Activated CD4-positive, alpha-beta memory T cell treated with anti-CD3 and anti-CD28 coated beads for 36 hours (primary cell): ENCODE measurements at regions of chr15 and their contacts with region 1.

Region 1: GRCh38 chr15:40108855-40109735 is at the start of gene BMF:
- DNase-seq: peak; percentile 98
- H3K4me3 Mint-ChIP-seq: peak within 1 kb of the TSS; percentile 84
- H3K27ac Mint-ChIP-seq: peak within 1 kb of the TSS; percentile 50
- H3K4me1 Mint-ChIP-seq: peaks cover 45% of the 10 kb centered on the region
- H3K27me3 Mint-ChIP-seq: peaks cover 6% of the 10 kb centered on the region
- total RNA-seq, gene BMF: 6.9 to 7.3 TPM

Region 2: DNA sequence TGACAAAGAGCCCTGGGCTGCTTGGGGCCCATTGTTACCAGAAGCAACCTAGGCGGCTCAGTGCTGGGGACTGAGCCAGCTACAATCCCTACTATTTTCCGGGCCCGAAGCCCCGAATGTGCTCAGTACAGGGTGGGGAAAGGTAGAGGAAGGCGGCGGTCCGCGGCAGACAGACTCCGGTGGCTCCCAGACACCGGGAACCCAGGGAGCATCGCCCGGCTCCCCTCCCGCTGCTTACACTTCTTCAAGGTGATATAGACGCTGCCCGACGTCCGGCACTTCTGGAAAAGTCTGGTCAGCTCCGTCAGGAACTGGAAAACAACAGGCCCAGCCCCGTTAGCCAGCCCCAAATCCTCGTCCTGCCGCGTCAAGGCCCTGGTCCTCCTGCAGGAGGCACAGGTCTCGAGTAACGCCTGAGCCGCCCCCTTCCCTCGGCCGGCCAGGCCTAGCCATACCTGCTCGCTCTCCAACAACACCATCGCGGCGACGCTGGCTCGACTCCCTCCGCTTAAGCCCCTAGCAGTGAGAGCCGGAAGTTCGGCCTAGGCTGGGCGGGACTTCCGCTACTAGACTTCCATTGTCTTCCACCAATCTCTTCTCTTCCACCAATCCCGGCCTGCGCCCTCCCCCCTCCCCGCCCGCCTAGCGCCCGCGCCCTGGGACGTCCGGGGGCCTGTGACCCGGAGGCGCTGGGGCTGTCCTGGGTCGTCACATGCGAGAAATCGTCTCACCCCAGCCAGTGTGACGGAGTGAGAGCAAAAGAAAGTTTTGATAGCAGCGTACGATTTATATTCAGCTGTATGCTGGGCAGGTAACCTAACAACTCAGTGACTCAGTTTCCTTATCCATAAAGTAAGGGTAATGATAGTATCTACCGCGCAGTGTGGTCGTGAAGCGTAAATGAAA is 70.2 kb before region 1 on chr15 and contains the start of gene SRP14:
- CTCF ChIA-PET with region 1: interaction called, 49 read pairs
- POLR2A ChIA-PET with region 1: interaction called, 12 read pairs
- intact Hi-C with region 1: no loop called
- DNase-seq: peak; percentile 97
- H3K4me3 Mint-ChIP-seq: peak within 1 kb of the TSS; percentile 98
- H3K27ac Mint-ChIP-seq: peak within 1 kb of the TSS; percentile 91
- H3K4me1 Mint-ChIP-seq: peaks cover 27% of the 10 kb centered on the region
- H3K27me3 Mint-ChIP-seq: no peaks in the 10 kb centered on the region
- total RNA-seq, gene SRP14: 168 to 170 TPM

Region 3: DNA sequence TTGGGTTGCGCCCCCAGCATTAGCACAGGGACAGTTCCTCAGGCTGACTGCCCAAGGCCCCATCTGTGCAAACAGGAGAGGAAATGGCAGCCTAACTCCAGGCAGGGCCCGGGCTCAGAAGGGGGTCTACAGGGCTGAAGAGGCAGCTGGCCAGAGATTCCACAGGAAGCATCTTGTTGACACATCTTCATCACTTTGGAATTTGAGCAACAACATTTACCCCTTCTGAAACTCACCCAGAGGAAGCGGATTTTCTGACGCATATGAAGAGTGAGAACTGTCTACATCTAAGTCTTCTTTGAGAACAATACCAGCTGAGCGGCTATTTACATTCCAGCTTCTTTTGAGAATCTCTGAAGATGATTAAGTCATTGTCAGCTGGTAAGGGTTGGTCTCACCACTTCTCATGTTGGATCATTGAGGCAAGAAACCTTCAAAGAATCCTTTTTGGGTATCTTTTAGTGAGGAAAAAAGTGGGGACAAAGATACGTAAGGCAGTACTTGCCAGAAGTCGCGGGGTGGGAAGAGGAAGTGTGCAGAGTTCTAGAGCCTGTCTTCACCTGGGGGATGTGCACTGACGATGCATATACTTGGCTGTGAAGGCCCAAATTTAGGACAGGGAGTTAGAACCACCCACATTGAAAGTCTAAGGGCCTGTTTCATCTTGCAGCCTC is 44.7 kb before region 1 on chr15:
- CTCF ChIA-PET with region 1: interaction called, 12 read pairs
- POLR2A ChIA-PET with region 1: interaction called, 3 read pairs
- intact Hi-C with region 1: no loop called
- DNase-seq: no peak
- H3K4me3 Mint-ChIP-seq: no peak overlapping the region
- H3K27ac Mint-ChIP-seq: peak overlapping the region; percentile 19
- H3K4me1 Mint-ChIP-seq: peaks cover 17% of the 10 kb centered on the region
- H3K27me3 Mint-ChIP-seq: no peaks in the 10 kb centered on the region

Region 4: DNA sequence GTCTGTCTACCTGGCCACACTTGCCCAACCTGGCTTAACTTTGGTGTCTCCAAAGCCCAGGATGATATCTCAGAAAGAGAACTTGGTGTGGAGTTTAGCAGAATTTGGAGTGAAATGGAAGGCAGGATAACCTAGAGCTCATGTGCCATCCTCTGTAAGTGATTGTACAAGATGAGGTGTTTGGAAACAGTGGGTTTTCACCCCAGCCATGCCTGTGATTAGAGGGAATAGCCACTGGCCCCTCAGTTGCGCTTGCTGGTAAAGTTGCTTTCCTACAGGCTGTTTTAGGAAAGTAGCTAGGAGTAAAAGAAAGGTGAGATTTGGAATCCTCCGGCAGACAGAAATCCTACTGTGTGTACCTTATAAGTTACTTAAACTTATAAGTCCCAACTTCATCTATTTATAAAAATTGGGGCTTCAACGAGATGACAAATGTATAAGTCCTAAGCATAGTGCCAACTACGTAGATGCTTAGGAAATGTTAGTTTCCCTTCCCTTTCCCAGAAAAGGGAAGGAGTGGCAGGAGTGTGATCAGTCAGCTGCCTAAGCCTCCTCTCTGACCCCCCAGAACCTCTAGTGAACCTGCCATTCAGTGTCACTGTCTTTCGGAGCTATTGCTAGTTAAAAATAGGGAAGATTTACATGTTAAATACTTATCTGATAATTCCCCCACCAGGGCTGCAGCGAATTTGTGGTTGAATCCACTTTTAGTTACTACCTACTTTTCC is 13.0 kb after region 1 on chr15:
- CTCF ChIA-PET with region 1: interaction called, 62 read pairs
- POLR2A ChIA-PET with region 1: interaction called, 3 read pairs
- intact Hi-C with region 1: no loop called
- DNase-seq: no peak
- H3K4me3 Mint-ChIP-seq: no peak overlapping the region
- H3K27ac Mint-ChIP-seq: no peak overlapping the region
- H3K4me1 Mint-ChIP-seq: no peaks in the 10 kb centered on the region
- H3K27me3 Mint-ChIP-seq: no peaks in the 10 kb centered on the region

Region 5: GRCh38 chr15:40160689-40161688 is 51.9 kb after region 1 on chr15 and contains the start of gene BUB1B:
- CTCF ChIA-PET with region 1: interaction called, 25 read pairs
- POLR2A ChIA-PET with region 1: interaction called, 5 read pairs
- intact Hi-C with region 1: loop called (anchors 1 kb)
- DNase-seq: peak; percentile 96
- H3K4me3 Mint-ChIP-seq: no peak within 1 kb of the TSS
- H3K27ac Mint-ChIP-seq: no peak within 1 kb of the TSS
- H3K4me1 Mint-ChIP-seq: peaks cover 6% of the 10 kb centered on the region
- H3K27me3 Mint-ChIP-seq: no peaks in the 10 kb centered on the region
- total RNA-seq, gene BUB1B: 88.8 to 96.1 TPM

Region 6: GRCh38 chr15:40183636-40184463 is 74.8 kb after region 1 on chr15:
- CTCF ChIA-PET with region 1: no interaction called
- POLR2A ChIA-PET with region 1: no interaction called
- intact Hi-C with region 1: no loop called
- DNase-seq: no peak
- H3K4me3 Mint-ChIP-seq: no peak overlapping the region
- H3K27ac Mint-ChIP-seq: no peak overlapping the region
- H3K4me1 Mint-ChIP-seq: peaks cover 24% of the 10 kb centered on the region
- H3K27me3 Mint-ChIP-seq: no peaks in the 10 kb centered on the region

Region 7: GRCh38 chr15:40506964-40507571 is 398.0 kb after region 1 on chr15:
- CTCF ChIA-PET with region 1: no interaction called
- POLR2A ChIA-PET with region 1: no interaction called
- intact Hi-C with region 1: no loop called
- DNase-seq: peak; percentile 74
- H3K4me3 Mint-ChIP-seq: no peak overlapping the region
- H3K27ac Mint-ChIP-seq: no peak overlapping the region
- H3K4me1 Mint-ChIP-seq: peaks cover 13% of the 10 kb centered on the region
- H3K27me3 Mint-ChIP-seq: peaks cover 45% of the 10 kb centered on the region

Region 8: GRCh38 chr15:40633143-40633542 is 524.0 kb after region 1 on chr15:
- CTCF ChIA-PET with region 1: no interaction called
- POLR2A ChIA-PET with region 1: no interaction called
- intact Hi-C with region 1: no loop called
- DNase-seq: no peak
- H3K4me3 Mint-ChIP-seq: no peak overlapping the region
- H3K27ac Mint-ChIP-seq: no peak overlapping the region
- H3K4me1 Mint-ChIP-seq: no peaks in the 10 kb centered on the region
- H3K27me3 Mint-ChIP-seq: no peaks in the 10 kb centered on the region